ENCODE measurements at regions of chr12 and their contacts with region 1.

Region 1: GRCh38 chr12:44930972-44931600 is 55.0 kb upstream of the NELL2 start:
- DNase-seq: peak; percentile 40
- ATAC-seq: peak; percentile 72
- H3K4me3 ChIP-seq: no peak overlapping the region
- H3K27ac ChIP-seq: no peak overlapping the region
- H3K4me1 ChIP-seq: no peaks in the 10 kb centered on the region
- H3K27me3 ChIP-seq: no peaks in the 10 kb centered on the region
- CTCF ChIP-seq: peak; percentile 24 to 71 (median 62); a peak in 4 of 6 replicates
- POLR2A ChIP-seq: no peak
- RAD21 ChIP-seq: peak; percentile 73

Region 2: GRCh38 chr12:44000309-44000952 is 930.7 kb before region 1 on chr12:
- CTCF ChIA-PET with region 1: interaction called, 8 read pairs
- POLR2A ChIA-PET with region 1: no interaction called
- RAD21 ChIA-PET with region 1: interaction called in 1 of 2 experiments, 4 read pairs
- intact Hi-C with region 1: loop called (anchors 1 kb)
- DNase-seq: peak; percentile 60
- ATAC-seq: peak; percentile 100
- H3K4me3 ChIP-seq: no peak overlapping the region
- H3K27ac ChIP-seq: no peak overlapping the region
- H3K4me1 ChIP-seq: no peaks in the 10 kb centered on the region
- H3K27me3 ChIP-seq: no peaks in the 10 kb centered on the region
- CTCF ChIP-seq: peak; percentile 52 to 86 (median 75)
- POLR2A ChIP-seq: no peak
- RAD21 ChIP-seq: peak; percentile 48

Region 3: GRCh38 chr12:44317651-44318126 is 613.4 kb before region 1 on chr12:
- CTCF ChIA-PET with region 1: interaction called, 5 read pairs
- POLR2A ChIA-PET with region 1: no interaction called
- RAD21 ChIA-PET with region 1: no interaction called
- intact Hi-C with region 1: loop called (anchors 10 kb)
- DNase-seq: peak; percentile 15
- ATAC-seq: peak; percentile 98
- H3K4me3 ChIP-seq: no peak overlapping the region
- H3K27ac ChIP-seq: no peak overlapping the region
- H3K4me1 ChIP-seq: no peaks in the 10 kb centered on the region
- H3K27me3 ChIP-seq: no peaks in the 10 kb centered on the region
- CTCF ChIP-seq: peak; percentile 20 to 55 (median 54); a peak in 5 of 6 replicates
- POLR2A ChIP-seq: no peak
- RAD21 ChIP-seq: peak; percentile 58

Region 4: GRCh38 chr12:44774815-44775411 is 156.2 kb before region 1 on chr12:
- CTCF ChIA-PET with region 1: interaction called, 7 read pairs
- POLR2A ChIA-PET with region 1: no interaction called
- RAD21 ChIA-PET with region 1: no interaction called
- intact Hi-C with region 1: loop called (anchors 2 kb)
- DNase-seq: peak; percentile 15
- ATAC-seq: peak; percentile 74
- H3K4me3 ChIP-seq: no peak overlapping the region
- H3K27ac ChIP-seq: no peak overlapping the region
- H3K4me1 ChIP-seq: no peaks in the 10 kb centered on the region
- H3K27me3 ChIP-seq: no peaks in the 10 kb centered on the region
- CTCF ChIP-seq: peak; percentile 42 to 96 (median 91); a peak in 5 of 6 replicates
- POLR2A ChIP-seq: no peak
- RAD21 ChIP-seq: peak; percentile 35; the same call in 1 of the 2 replicates

Region 5: DNA sequence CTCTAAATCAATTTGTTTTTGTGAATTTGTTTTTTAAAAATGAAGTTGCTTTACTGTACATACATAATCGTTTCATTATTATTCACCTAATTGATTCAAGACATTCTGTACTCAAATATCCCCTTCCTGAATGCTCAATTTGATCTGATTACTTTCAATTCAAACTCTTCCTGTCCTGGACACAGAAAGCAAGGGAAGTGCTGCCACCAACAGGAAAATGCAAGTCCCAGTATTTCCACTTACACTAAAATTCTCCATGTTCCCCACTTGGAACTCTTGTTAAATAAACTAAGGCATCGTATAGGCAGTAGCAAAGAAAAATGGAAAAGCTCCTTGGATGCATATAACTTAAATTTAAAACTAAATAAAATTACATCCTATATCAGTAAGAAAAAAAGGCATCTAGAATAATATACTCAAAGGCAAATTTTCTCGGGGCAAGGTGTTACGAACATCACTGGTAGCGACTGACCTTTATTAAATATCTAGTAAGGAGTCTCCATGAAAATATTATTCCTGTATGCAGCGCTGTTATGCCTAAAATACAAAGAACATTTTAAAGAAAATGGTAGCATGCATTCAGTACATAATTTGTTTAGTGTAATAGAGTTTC is 191.8 kb after region 1 on chr12:
- CTCF ChIA-PET with region 1: no interaction called
- POLR2A ChIA-PET with region 1: no interaction called
- RAD21 ChIA-PET with region 1: no interaction called
- intact Hi-C with region 1: loop called (anchors 2 kb)
- DNase-seq: peak; percentile 39
- ATAC-seq: peak; percentile 63
- H3K4me3 ChIP-seq: no peak overlapping the region
- H3K27ac ChIP-seq: no peak overlapping the region
- H3K4me1 ChIP-seq: no peaks in the 10 kb centered on the region
- H3K27me3 ChIP-seq: no peaks in the 10 kb centered on the region
- CTCF ChIP-seq: peak; percentile 63 to 85 (median 65)
- POLR2A ChIP-seq: no peak
- RAD21 ChIP-seq: peak; percentile 81